Activated B cell treated with CpG ODN at 0.5 μM for 24 hours (primary cell): ENCODE measurements at regions of chr9 and their contacts with region 1.

Region 1: DNA sequence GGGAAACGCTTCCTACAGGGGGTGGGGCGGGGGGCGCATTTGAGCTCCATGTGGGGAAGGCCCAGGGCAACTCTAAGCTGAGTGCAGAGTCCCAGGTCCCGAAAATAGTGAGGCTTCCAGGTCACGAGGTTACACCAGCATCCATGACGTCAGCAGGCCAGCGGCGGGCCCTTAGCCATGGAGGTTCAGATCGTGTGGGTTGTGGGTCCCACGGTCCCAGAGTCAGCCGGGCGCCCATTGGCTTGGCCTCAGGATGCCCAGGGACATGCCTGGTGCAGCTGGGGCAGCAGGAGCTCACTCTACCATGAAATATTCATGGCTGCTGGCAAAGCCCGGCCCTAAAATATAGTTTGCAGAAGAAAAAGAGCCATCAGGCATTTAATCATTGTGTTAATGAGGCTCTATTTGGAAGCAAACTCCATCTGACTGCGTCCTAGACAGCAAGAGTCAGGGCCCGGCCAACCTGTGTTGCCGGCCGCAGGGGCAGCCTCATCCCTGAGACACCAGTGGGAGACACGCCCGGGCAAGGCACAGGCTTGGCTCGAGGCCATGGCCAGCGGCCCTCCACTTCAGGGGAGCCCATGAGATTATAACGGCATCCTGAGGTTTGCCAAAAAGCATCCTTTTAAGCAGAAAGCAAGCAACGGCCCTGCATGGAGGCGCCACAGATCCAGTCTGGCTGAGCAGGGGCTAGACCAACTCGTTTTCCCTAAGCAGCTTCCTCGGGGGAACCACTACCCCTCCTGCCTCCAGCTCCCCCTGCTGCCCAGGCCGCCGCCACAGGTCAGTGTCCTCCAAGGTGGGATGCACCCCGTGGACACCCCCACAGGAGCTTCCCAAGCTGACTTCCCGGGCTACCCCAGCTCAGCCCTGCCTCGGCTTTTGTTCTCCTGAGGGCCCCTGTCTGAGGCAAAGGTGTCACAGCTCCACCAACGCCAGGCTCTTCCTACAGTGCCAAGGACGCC is 108.9 kb upstream of the PPP1R26 start:
- DNase-seq: no peak
- ATAC-seq: no peak
- H3K4me3 Mint-ChIP-seq: no peak overlapping the region
- H3K27ac Mint-ChIP-seq: no peak overlapping the region
- H3K4me1 Mint-ChIP-seq: no peaks in the 10 kb centered on the region
- H3K27me3 Mint-ChIP-seq: no peaks in the 10 kb centered on the region
- CTCF ChIP-seq: no peak

Region 2: DNA sequence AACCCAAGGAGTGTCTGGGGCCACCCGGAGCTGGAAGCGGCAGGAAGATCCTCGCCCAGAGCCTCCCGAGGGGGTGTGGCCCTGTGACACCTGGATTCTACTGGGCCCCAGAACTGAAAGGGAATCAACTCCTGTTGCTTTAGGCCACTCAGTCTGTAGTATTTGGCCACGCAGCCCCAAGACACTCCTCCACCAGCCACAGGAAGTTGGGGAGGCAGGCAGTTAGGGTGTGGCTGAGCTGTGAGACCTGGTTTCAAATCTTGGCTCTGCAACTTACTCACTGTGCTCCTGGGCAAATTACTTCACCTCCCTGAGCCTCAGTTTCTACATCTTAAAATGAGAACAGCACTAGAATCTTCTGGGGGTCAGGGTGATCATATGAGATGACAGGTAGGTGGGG is 10.9 kb before region 1 on chr9:
- CTCF ChIA-PET with region 1: no interaction called
- POLR2A ChIA-PET with region 1: interaction called, 14 read pairs
- intact Hi-C with region 1: no loop called
- DNase-seq: no peak
- ATAC-seq: no peak
- H3K4me3 Mint-ChIP-seq: no peak overlapping the region
- H3K27ac Mint-ChIP-seq: no peak overlapping the region
- H3K4me1 Mint-ChIP-seq: no peaks in the 10 kb centered on the region
- H3K27me3 Mint-ChIP-seq: peaks cover 2% of the 10 kb centered on the region
- CTCF ChIP-seq: no peak